ENCODE measurements at regions of chr1 and their contacts with region 1.

Region 1: DNA sequence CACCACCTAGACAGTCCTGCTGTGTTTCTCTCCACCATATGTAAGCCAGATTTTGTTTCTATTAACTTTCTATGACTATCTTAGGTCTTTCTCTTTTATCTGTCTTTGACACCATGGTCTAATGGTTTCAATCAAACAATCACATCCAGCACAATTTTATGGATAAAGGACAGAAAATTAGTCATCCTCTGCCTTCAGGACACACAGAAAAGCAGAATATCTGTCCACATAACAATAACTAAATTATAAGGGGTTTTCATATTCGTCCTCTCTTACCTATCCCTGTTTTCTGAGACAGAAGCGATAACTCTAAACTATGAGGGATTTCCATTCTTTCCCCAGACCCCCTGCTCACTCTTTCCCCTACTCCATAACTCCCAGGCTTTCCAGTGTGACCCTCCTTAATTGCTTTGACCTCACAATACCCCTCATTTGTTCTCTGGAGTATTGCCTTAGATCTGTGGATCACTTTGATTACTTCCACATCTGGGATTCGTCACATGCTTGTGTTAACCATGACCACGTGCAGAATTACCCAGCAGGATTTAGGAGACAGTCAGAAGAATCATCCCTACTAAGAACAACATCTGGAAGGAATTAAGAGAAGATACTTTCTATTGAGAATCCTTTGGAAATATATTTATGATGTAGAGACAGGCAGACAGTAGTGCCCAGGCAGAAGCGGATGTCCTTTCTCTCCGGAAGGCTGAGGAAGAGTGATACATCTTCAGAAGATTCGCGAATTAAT is 108.2 kb upstream of the GREM2 start:
- DNase-seq: no peak
- H3K4me3 ChIP-seq: no peak overlapping the region
- H3K27ac ChIP-seq: no peak overlapping the region
- H3K4me1 ChIP-seq: no peaks in the 10 kb centered on the region
- H3K27me3 ChIP-seq: no peaks in the 10 kb centered on the region
- CTCF ChIP-seq: no peak
- POLR2A ChIP-seq: no peak

Region 2: DNA sequence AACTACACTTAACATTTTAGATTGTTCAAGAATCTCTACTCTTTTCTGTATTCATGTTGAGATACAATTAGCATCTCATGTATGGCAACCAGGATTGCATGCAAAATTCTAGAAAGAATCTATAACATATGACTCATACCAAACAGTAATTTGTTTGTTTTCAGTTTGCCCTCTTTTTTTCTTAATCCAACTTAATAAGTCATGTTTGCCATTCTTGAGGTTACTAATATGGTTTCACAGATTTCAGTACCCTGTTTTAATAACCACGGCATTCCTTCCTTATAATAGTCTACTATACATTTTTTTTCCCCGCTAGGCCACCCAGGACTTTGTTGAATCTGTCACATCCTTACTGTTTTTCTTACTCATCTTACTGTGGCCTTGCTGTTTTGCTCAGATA is 487.6 kb before region 1 on chr1:
- CTCF ChIA-PET with region 1: no interaction called
- POLR2A ChIA-PET with region 1: no interaction called
- dilution Hi-C with region 1: no loop called
- intact Hi-C with region 1: no loop called
- DNase-seq: no peak
- H3K4me3 ChIP-seq: no peak overlapping the region
- H3K27ac ChIP-seq: no peak overlapping the region
- H3K4me1 ChIP-seq: no peaks in the 10 kb centered on the region
- H3K27me3 ChIP-seq: no peaks in the 10 kb centered on the region
- CTCF ChIP-seq: no peak
- POLR2A ChIP-seq: no peak

Region 3: GRCh38 chr1:240706150-240706935 is 13.8 kb before region 1 on chr1:
- CTCF ChIA-PET with region 1: no interaction called
- POLR2A ChIA-PET with region 1: no interaction called
- dilution Hi-C with region 1: no loop called
- intact Hi-C with region 1: no loop called
- DNase-seq: no peak
- H3K4me3 ChIP-seq: no peak overlapping the region
- H3K27ac ChIP-seq: no peak overlapping the region
- H3K4me1 ChIP-seq: no peaks in the 10 kb centered on the region
- H3K27me3 ChIP-seq: no peaks in the 10 kb centered on the region
- CTCF ChIP-seq: no peak
- POLR2A ChIP-seq: no peak

Region 4: DNA sequence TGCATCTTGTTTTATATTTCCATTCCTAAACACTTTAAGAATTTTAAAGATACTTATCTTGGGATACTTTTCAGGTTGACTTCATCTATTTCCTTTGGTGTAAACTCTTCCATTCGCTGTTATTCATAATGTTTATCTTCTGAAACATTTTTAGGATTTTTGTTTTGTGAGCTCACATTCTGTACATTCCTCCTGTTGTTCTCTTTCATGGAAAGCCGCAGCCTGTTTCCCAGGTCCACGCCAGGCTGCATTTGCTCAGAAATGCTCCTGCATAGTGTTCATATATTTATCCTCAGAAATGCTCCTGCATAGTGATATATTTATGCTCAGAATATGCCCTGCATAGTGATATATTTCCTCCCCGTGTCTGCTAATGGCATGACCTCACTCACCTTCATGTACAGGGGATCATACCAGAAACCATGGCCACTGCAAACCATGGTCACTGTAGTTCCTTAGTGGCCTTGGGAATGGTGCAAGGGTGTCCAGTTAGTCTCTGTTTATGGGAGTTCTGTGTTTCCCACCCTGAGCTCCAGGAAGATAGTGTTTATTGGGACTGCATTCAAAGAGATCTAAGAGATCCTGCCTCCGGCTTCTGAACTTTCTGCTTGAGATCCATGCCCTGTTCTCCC is 45.7 kb after region 1 on chr1:
- CTCF ChIA-PET with region 1: no interaction called
- POLR2A ChIA-PET with region 1: no interaction called
- dilution Hi-C with region 1: no loop called
- intact Hi-C with region 1: no loop called
- DNase-seq: peak; percentile 75
- H3K4me3 ChIP-seq: no peak overlapping the region
- H3K27ac ChIP-seq: peak overlapping the region; percentile 89
- H3K4me1 ChIP-seq: peaks cover 20% of the 10 kb centered on the region
- H3K27me3 ChIP-seq: no peaks in the 10 kb centered on the region
- CTCF ChIP-seq: no peak
- POLR2A ChIP-seq: no peak

Region 5: GRCh38 chr1:242205622-242206489 is 1485.7 kb after region 1 on chr1:
- CTCF ChIA-PET with region 1: no interaction called
- POLR2A ChIA-PET with region 1: interaction called, 11 read pairs
- dilution Hi-C with region 1: no loop called
- intact Hi-C with region 1: no loop called
- DNase-seq: no peak
- H3K4me3 ChIP-seq: no peak overlapping the region
- H3K27ac ChIP-seq: no peak overlapping the region
- H3K4me1 ChIP-seq: no peaks in the 10 kb centered on the region
- H3K27me3 ChIP-seq: no peaks in the 10 kb centered on the region
- CTCF ChIP-seq: no peak
- POLR2A ChIP-seq: no peak

Measured in endothelial cell of umbilical vein (primary cell).